CD4-positive, alpha-beta T cell (primary cell): ENCODE measurements at regions of chr15 and their contacts with region 1.

Region 1: DNA sequence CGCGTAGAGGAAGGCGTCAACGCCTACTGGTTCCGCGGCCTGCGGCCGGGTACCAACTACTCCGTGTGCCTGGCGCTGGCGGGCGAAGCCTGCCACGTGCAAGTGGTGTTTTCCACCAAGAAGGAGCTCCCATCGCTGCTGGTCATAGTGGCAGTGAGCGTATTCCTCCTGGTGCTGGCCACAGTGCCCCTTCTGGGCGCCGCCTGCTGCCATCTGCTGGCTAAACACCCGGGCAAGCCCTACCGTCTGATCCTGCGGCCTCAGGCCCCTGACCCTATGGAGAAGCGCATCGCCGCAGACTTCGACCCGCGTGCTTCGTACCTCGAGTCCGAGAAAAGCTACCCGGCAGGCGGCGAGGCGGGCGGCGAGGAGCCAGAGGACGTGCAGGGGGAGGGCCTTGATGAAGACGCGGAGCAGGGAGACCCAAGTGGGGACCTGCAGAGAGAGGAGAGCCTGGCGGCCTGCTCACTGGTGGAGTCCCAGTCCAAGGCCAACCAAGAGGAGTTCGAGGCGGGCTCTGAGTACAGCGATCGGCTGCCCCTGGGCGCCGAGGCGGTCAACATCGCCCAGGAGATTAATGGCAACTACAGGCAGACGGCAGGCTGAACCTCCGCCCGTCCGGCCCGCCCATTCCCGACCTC is 4.1 kb downstream of the ISLR2 start:
- DNase-seq: no peak
- ATAC-seq: no peak
- H3K4me3 ChIP-seq: no peak overlapping the region
- H3K4me3 Mint-ChIP-seq: peak overlapping the region; percentile 72
- H3K27ac ChIP-seq: no peak overlapping the region
- H3K27ac Mint-ChIP-seq: no peak overlapping the region
- H3K4me1 ChIP-seq: peaks cover 32% of the 10 kb centered on the region
- H3K4me1 Mint-ChIP-seq: peaks cover 43% of the 10 kb centered on the region
- H3K27me3 ChIP-seq: peaks cover 82 to 90% of the 10 kb centered on the region in 2 experiments
- H3K27me3 Mint-ChIP-seq: peaks cover 91% of the 10 kb centered on the region
- CTCF ChIP-seq: no peak

Region 2: GRCh38 chr15:73950831-73951561 is 183.5 kb before region 1 on chr15:
- CTCF ChIA-PET with region 1: no interaction called
- POLR2A ChIA-PET with region 1: no interaction called
- intact Hi-C with region 1: loop called in 1 of 2 experiments (anchors 10 kb)
- DNase-seq: peak; percentile 63 to 85 (median 75)
- ATAC-seq: peak; percentile 97
- H3K4me3 ChIP-seq: no peak overlapping the region
- H3K4me3 Mint-ChIP-seq: no peak overlapping the region
- H3K27ac ChIP-seq: no peak overlapping the region
- H3K27ac Mint-ChIP-seq: peak overlapping the region; percentile 40
- H3K4me1 ChIP-seq: peaks cover 12% of the 10 kb centered on the region
- H3K4me1 Mint-ChIP-seq: peaks cover 9% of the 10 kb centered on the region
- H3K27me3 ChIP-seq: no peaks in the 10 kb centered on the region
- H3K27me3 Mint-ChIP-seq: no peaks in the 10 kb centered on the region
- CTCF ChIP-seq: peak; percentile 86